ENCODE measurements at regions of chr18 and their contacts with region 1.

Region 1: DNA sequence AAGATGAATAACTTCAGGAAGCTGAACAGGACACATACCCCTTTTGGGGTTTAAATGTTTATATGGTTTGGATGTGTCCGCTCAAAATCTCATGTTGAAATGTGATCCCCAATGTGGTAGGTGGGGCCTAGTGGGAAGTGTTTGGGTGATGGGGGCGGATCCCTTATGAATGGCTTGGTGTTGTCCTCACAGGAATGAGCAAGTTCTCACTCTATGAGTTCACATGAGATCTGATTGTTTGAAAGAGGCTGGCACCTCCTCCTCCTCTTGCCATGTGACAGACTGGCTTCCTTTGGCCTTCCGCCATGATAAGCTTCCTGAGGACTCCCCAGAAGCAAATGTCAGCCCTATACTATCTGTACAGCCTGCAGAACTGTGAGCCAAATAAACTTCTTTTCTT is 88.6 kb upstream of the ZNF532 start:
- DNase-seq: no peak
- ATAC-seq: no peak

Region 2: DNA sequence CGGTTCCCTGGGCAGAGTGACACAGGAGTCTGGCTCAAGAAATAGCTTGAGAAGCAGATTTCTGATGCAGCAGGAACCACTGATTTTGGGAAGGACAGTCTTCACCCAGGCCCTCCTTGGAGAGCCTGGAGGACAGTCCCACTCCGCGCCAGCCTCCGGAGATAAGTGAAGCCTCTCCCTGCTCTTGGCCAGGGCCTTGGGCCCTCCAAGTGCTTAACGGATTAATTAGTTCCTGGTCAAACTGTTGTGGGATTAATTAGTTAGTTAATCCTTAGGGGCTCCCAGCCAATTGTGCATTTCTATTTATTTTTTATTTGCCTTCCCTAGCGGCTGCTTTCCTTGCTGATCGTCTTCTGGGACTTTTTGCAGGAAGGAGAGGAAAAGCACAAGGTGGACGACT is 522.8 kb after region 1 on chr18:
- intact Hi-C with region 1: loop called (anchors 10 kb)
- DNase-seq: no peak
- ATAC-seq: no peak

Measured in Right ventricle myocardium inferior (tissue), 1 donor.